Naive thymus-derived CD4-positive, alpha-beta T cell (primary cell): ENCODE measurements at regions of chrX and their contacts with region 1.

Region 1: DNA sequence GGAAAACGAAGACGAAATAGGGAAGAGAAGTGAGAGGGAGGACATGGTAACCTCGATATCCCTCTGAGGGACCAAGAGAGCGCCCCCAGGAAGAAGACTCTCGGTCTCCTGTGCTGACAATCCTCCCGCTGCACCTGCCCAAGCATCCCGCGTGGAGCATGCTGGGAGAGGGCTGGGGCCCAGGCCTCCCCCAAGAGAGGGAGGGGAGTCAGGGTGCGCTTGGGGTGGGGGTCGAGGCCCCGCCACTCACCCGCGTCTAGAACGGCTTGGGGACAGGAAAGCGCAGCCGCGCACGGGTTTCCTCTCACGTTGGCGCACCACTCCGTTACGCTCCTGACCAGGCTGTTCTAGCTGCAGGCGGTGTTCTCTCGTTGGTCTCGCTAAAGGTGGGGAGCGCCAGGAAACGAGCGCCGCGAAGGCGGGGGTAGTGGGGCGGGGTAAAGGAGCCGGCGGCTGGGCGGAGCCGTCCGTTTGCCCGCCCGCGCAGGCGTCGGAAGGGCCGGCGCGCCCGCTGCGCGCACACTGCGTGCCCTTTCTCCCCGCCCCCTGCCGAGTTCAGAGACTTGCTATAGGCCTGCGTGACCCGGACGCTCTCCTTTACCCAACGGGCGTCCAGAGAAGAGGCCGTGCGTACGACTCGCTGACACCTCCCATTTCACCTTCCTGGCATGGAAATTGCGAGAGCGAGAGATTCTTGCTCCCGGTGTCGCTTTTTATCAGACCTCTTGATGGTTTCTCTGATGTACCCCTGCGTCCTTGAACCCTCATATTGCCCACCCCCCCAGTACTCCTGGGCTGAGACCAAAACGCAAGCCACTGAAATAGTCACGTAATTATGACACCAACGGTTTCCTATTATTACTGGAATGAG is at the start of gene C1GALT1C1:
- DNase-seq: peak; percentile 80 to 96 (median 92)
- ATAC-seq: peak; percentile 95
- H3K4me3 ChIP-seq: peak within 1 kb of the TSS; percentile 87
- H3K4me3 Mint-ChIP-seq: peak within 1 kb of the TSS; percentile 87 to 94 (median 92)
- H3K27ac ChIP-seq: peak within 1 kb of the TSS; percentile 95
- H3K27ac Mint-ChIP-seq: peak within 1 kb of the TSS; percentile 96 to 100 (median 98)
- H3K4me1 ChIP-seq: peaks cover 6 to 11% of the 10 kb centered on the region in 2 donors
- H3K4me1 Mint-ChIP-seq: peaks cover 0 to 32% (median 24%) of the 10 kb centered on the region in 7 donors
- H3K27me3 ChIP-seq: no peaks in the 10 kb centered on the region
- H3K27me3 Mint-ChIP-seq: no peaks in the 10 kb centered on the region
- total RNA-seq, gene C1GALT1C1: 4.7 to 29.5 (median 16.4) TPM

Region 2: DNA sequence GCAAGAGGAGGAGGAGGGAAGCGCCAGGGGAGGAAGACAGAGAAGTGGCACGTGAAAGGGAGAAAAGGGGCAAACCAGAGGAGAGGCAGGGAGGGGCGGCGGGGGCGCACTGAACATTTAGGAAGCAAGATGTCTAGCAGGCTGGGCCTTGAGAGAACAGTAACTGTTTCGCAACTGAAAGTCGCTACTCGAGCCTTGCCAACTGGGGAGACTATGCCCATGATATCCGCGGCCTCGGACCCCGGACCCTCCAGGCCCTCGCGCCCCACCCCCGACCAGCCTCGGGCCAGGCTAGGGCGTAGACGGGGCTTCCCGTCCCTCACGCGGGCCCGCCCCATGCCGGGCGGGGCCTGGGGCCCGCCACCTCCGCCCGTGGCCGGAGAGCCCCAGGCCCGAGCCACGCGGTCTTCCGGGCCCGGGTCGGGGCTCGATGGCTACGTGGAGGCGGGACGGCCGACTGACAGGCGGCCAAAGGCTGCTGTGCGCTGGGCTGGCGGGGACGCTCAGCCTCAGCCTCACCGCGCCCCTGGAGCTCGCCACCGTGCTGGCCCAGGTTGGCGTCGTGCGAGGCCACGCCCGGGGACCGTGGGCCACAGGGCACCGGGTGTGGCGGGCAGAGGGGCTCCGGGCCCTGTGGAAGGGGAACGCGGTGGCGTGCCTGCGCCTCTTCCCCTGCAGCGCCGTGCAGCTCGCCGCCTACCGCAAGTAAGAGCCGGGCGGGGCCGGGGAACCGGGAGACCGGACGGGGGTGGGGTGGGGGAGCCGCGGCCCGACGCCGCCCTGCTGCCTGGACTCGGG is 1230.7 kb before region 1 on chrX and contains the start of gene SLC25A43:
- CTCF ChIA-PET with region 1: no interaction called
- POLR2A ChIA-PET with region 1: no interaction called
- intact Hi-C with region 1: loop called in 1 of 2 experiments (anchors 5 kb)
- DNase-seq: peak; percentile 6 to 49 (median 15)
- ATAC-seq: peak; percentile 85
- H3K4me3 ChIP-seq: peak within 1 kb of the TSS; percentile 34
- H3K4me3 Mint-ChIP-seq: peak within 1 kb of the TSS; percentile 74 to 95 (median 88)
- H3K27ac ChIP-seq: peak within 1 kb of the TSS; percentile 62
- H3K27ac Mint-ChIP-seq: peak within 1 kb of the TSS; percentile 47 to 96 (median 79)
- H3K4me1 ChIP-seq: no peaks in the 10 kb centered on the region
- H3K4me1 Mint-ChIP-seq: peaks cover 0 to 26% (median 10%) of the 10 kb centered on the region in 7 donors
- H3K27me3 ChIP-seq: no peaks in the 10 kb centered on the region
- H3K27me3 Mint-ChIP-seq: peaks cover 0 to 6% (median 0%) of the 10 kb centered on the region in 5 donors
- total RNA-seq, gene SLC25A43: 1.8 to 8.2 (median 2.6) TPM

Region 3: GRCh38 chrX:120499301-120500072 is 130.4 kb before region 1 on chrX:
- CTCF ChIA-PET with region 1: no interaction called
- POLR2A ChIA-PET with region 1: no interaction called
- intact Hi-C with region 1: loop called in 1 of 2 experiments (anchors 1 kb)
- DNase-seq: no peak
- ATAC-seq: no peak
- H3K4me3 ChIP-seq: no peak overlapping the region
- H3K4me3 Mint-ChIP-seq: no peak overlapping the region
- H3K27ac ChIP-seq: no peak overlapping the region
- H3K27ac Mint-ChIP-seq: peak overlapping the region in 1 of 9 donors; percentile 1
- H3K4me1 ChIP-seq: no peaks in the 10 kb centered on the region
- H3K4me1 Mint-ChIP-seq: peaks cover 5 to 11% (median 6%) of the 10 kb centered on the region in 7 donors
- H3K27me3 ChIP-seq: no peaks in the 10 kb centered on the region
- H3K27me3 Mint-ChIP-seq: peaks cover 0 to 5% (median 0%) of the 10 kb centered on the region in 5 donors

Region 4: GRCh38 chrX:120603707-120604360 is 26.1 kb before region 1 on chrX and contains the start of gene MCTS1:
- CTCF ChIA-PET with region 1: no interaction called
- POLR2A ChIA-PET with region 1: interaction called, 33 read pairs
- intact Hi-C with region 1: loop called (anchors 1 kb)
- DNase-seq: peak; percentile 40 to 91 (median 82)
- ATAC-seq: peak; percentile 95
- H3K4me3 ChIP-seq: peak within 1 kb of the TSS; percentile 55
- H3K4me3 Mint-ChIP-seq: peak within 1 kb of the TSS; percentile 91 to 99 (median 96)
- H3K27ac ChIP-seq: peak within 1 kb of the TSS; percentile 87
- H3K27ac Mint-ChIP-seq: peak within 1 kb of the TSS; percentile 96 to 99 (median 98)
- H3K4me1 ChIP-seq: peaks cover 6 to 10% of the 10 kb centered on the region in 2 donors
- H3K4me1 Mint-ChIP-seq: peaks cover 0 to 19% (median 10%) of the 10 kb centered on the region in 7 donors
- H3K27me3 ChIP-seq: no peaks in the 10 kb centered on the region
- H3K27me3 Mint-ChIP-seq: peaks cover 0 to 7% (median 0%) of the 10 kb centered on the region in 5 donors
- total RNA-seq, gene MCTS1: 17.6 to 55.6 (median 27.3) TPM

Region 5: GRCh38 chrX:120664081-120664480 is 34.2 kb after region 1 on chrX:
- CTCF ChIA-PET with region 1: no interaction called
- POLR2A ChIA-PET with region 1: interaction called, 3 read pairs
- intact Hi-C with region 1: loop called in 1 of 2 experiments (anchors 1 kb)
- DNase-seq: peak in 5 of 9 donors; percentile 22 to 36 (median 33)
- ATAC-seq: no peak
- H3K4me3 ChIP-seq: no peak overlapping the region
- H3K4me3 Mint-ChIP-seq: no peak overlapping the region
- H3K27ac ChIP-seq: no peak overlapping the region
- H3K27ac Mint-ChIP-seq: peak overlapping the region in 2 of 9 donors; percentile 17 to 71
- H3K4me1 ChIP-seq: no peaks in the 10 kb centered on the region
- H3K4me1 Mint-ChIP-seq: peaks cover 0 to 7% (median 0%) of the 10 kb centered on the region in 7 donors
- H3K27me3 ChIP-seq: no peaks in the 10 kb centered on the region
- H3K27me3 Mint-ChIP-seq: no peaks in the 10 kb centered on the region

Region 6: DNA sequence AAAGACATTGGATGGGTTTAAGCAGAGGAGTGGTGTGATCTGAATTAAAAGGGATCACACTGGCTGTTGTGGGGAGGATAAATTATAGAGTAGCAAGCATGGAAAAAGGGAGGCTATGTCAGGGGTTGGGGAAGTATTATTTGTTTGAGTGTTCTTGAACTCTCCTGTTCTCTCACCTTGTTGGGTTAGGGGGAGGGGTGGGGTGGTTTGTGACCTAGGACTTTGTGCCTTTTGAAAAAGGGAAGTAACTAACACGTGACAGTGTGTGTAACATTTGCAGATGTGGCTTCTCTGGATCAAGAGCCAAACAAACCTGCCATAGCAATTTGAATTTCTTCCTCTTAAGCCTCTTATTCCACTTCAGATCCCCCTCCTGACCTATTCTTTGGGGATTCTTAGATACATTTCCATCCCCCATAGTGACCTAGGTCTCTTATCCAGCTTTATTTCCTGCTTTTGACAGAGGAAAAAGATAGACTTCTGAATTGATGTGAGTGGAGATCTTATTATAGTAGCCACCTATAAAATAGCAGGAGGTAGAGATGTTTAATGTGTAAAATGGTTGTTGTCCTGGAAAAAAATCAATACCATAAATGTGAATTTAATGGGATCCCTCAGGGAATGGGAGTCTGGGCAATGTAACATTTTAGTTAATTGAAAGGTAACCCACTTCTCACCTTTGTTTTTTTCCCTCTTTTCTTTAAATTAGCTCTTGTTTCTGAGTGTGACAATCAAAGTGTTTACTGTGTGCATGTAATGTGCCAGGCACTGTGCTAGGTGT is 125.4 kb after region 1 on chrX:
- CTCF ChIA-PET with region 1: no interaction called
- POLR2A ChIA-PET with region 1: no interaction called
- intact Hi-C with region 1: no loop called
- DNase-seq: peak in 6 of 9 donors; percentile 20 to 61 (median 41)
- ATAC-seq: peak; percentile 60
- H3K4me3 ChIP-seq: no peak overlapping the region
- H3K4me3 Mint-ChIP-seq: peak overlapping the region in 9 of 10 donors; percentile 7 to 58 (median 52)
- H3K27ac ChIP-seq: no peak overlapping the region
- H3K27ac Mint-ChIP-seq: peak overlapping the region in 8 of 9 donors; percentile 28 to 80 (median 62)
- H3K4me1 ChIP-seq: peaks cover 0 to 39% of the 10 kb centered on the region in 2 donors
- H3K4me1 Mint-ChIP-seq: peaks cover 25 to 59% (median 52%) of the 10 kb centered on the region in 7 donors
- H3K27me3 ChIP-seq: no peaks in the 10 kb centered on the region
- H3K27me3 Mint-ChIP-seq: no peaks in the 10 kb centered on the region

Region 7: GRCh38 chrX:120769576-120770341 is 139.9 kb after region 1 on chrX:
- CTCF ChIA-PET with region 1: no interaction called
- POLR2A ChIA-PET with region 1: no interaction called
- intact Hi-C with region 1: loop called in 1 of 2 experiments (anchors 1 kb)
- DNase-seq: peak in 4 of 9 donors; percentile 5 to 39 (median 34)
- ATAC-seq: no peak
- H3K4me3 ChIP-seq: no peak overlapping the region
- H3K4me3 Mint-ChIP-seq: no peak overlapping the region
- H3K27ac ChIP-seq: no peak overlapping the region
- H3K27ac Mint-ChIP-seq: no peak overlapping the region
- H3K4me1 ChIP-seq: no peaks in the 10 kb centered on the region
- H3K4me1 Mint-ChIP-seq: peaks cover 0 to 11% (median 0%) of the 10 kb centered on the region in 7 donors
- H3K27me3 ChIP-seq: no peaks in the 10 kb centered on the region
- H3K27me3 Mint-ChIP-seq: no peaks in the 10 kb centered on the region